AG04450 (cell line): ENCODE measurements at regions of chr1 and their contacts with region 1.

Region 1: GRCh38 chr1:180585994-180586359 is 27.2 kb downstream of the OVAAL start:
- DNase-seq: no peak
- H3K4me3 ChIP-seq: no peak overlapping the region
- H3K27ac ChIP-seq: peak overlapping the region; percentile 82
- H3K27me3 ChIP-seq: no peaks in the 10 kb centered on the region
- CTCF ChIP-seq: no peak

Region 2: GRCh38 chr1:180609643-180610555 is 23.9 kb after region 1 on chr1:
- CTCF ChIA-PET with region 1: interaction called, 10 read pairs
- POLR2A ChIA-PET with region 1: interaction called, 3 read pairs
- DNase-seq: no peak
- H3K4me3 ChIP-seq: no peak overlapping the region
- H3K27ac ChIP-seq: peak overlapping the region; percentile 32
- H3K27me3 ChIP-seq: no peaks in the 10 kb centered on the region
- CTCF ChIP-seq: no peak

Region 3: DNA sequence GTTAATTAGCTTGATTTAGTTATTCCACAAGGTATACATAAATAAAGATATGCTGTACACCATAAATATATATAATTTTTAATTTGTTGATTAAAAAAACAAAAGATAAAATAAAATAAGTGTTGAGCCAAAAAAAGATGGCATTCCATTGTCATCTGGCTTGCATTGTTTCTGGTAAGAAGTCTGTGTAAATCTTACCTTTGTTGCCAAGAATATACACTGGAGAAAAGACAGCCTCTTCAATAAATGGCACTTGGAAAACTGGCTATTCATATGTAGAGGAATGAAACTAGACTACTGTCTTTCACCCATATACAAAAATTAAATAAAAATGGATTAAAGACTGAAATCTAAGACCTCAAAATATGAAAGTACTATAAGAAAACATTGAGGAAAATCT is 699.0 kb after region 1 on chr1:
- CTCF ChIA-PET with region 1: no interaction called
- POLR2A ChIA-PET with region 1: no interaction called
- DNase-seq: no peak
- H3K4me3 ChIP-seq: no peak overlapping the region
- H3K27ac ChIP-seq: no peak overlapping the region
- H3K27me3 ChIP-seq: no peaks in the 10 kb centered on the region
- CTCF ChIP-seq: no peak